PC-9 (cell line): ENCODE measurements at regions of chrX and their contacts with region 1.

Region 1: DNA sequence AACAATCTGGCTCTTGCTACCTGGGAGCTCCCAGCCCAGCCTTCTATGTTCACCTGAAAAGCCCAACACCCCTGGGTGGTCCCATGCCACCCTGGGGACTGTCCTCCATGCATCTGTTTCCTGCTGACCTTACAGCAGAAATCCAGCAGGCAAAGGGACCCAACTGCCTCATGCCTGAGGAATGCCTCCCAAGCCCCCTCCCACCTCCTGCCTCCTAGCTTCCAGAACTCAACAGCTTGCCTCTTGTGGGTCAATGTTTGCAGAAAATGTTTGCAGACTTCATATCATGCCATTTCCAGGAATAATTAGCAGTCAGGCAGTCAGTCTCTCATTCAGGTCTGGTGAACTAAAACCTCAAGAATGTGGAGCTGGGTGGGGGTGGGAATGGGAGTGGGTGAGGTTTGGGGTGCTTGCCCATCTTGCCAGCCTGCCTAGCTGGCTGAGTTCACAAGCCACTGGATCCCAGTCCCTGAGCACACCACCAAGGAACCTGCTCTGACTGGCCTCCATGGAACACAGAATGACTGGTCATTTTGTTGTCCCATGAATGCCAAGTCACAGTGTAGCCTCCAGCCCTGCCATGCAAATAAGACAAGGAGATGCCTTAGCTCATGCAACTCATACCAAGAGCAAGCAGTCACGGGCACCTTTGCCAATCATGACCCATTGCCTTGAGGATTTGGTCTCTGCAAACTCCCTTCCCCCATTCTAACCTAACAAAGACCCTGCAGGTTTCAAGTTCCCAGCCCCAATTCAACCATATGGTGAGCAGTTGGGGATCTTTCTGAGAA is 12.1 kb upstream of the PLAC1 start:
- DNase-seq: peak; percentile 88 to 98
- H3K4me3 ChIP-seq: no peak overlapping the region
- H3K27ac ChIP-seq: peak overlapping the region; percentile 85
- H3K4me1 ChIP-seq: peaks cover 32% of the 10 kb centered on the region
- H3K27me3 ChIP-seq: no peaks in the 10 kb centered on the region
- CTCF ChIP-seq: no peak

Region 2: GRCh38 chrX:134520860-134521390 is 149.4 kb before region 1 on chrX:
- CTCF ChIA-PET with region 1: no interaction called
- POLR2A ChIA-PET with region 1: no interaction called
- intact Hi-C with region 1: loop called (anchors 1 kb)
- DNase-seq: peak; percentile 48 to 66
- H3K4me3 ChIP-seq: no peak overlapping the region
- H3K27ac ChIP-seq: no peak overlapping the region
- H3K4me1 ChIP-seq: peaks cover 11% of the 10 kb centered on the region; the same call in 1 of the 2 replicates
- H3K27me3 ChIP-seq: no peaks in the 10 kb centered on the region
- CTCF ChIP-seq: peak; percentile 78

Region 3: DNA sequence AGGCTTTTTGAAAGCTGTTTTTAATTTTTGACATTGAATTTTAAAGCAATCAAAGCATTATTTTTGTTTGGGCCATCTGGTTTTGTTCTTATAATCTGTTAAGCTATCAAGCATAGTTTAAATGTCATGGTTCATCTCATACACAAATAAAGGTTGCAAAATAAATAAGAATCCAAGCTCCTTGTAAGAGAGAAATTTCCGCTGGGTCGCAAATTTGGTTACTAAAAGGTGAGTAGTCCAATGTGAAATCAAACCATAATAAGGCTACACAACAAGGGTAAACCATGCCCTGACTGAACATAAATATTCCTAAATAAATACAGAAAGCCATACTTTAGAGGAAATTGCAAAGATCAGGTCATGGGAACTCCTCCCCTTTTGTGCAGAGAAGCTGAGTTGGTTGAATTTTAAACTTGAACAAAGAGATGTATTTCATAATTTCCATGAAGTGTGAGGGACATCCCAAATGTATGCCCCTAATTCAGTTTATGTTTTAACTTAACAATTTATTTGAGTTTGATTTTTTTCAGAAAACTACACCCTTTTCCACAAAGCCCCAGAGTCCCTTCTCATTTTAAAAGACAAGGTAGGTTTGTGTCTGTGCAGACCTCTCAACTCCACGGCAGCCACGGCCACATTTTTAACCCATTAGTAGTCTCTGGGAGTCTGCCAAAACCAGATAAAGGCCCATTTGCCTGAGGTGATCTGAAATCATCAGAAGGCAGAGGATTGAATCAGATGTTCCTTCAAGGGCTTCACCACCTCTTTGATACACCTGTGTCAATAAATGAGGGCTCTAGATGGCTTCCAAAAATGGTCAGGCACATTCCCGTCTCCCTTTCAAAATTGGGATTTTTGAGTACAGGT is 97.3 kb before region 1 on chrX:
- CTCF ChIA-PET with region 1: interaction called, 8 read pairs
- POLR2A ChIA-PET with region 1: interaction called, 6 read pairs
- intact Hi-C with region 1: loop called (anchors 1 kb)
- DNase-seq: peak; percentile 58 to 89
- H3K4me3 ChIP-seq: peak overlapping the region; percentile 10; the same call in 1 of the 2 replicates
- H3K27ac ChIP-seq: peak overlapping the region; percentile 58
- H3K4me1 ChIP-seq: peaks cover 69% of the 10 kb centered on the region
- H3K27me3 ChIP-seq: no peaks in the 10 kb centered on the region
- CTCF ChIP-seq: no peak

Region 4: DNA sequence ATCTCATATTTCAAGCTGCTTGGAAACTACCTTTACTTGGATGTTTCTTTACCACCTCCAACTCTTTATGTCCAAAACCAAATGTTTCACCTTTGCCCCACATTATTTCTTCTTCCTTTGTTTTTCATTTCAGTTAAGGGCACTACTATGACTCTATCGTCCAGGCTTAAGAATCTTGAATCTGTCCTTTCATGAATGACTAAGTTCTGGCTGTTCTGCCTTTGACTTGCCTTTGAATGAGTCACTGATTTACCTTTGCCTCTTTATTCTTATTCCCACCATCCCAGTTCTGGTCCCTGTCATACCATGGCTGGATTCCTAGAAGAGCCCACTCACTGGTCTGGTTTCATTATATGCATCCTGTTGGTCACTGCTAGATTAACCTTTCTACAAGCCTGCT is 18.5 kb after region 1 on chrX:
- CTCF ChIA-PET with region 1: interaction called, 5 read pairs
- POLR2A ChIA-PET with region 1: no interaction called
- intact Hi-C with region 1: loop called (anchors 2 kb)
- DNase-seq: peak in 1 of 2 experiments; percentile 63
- H3K4me3 ChIP-seq: no peak overlapping the region
- H3K27ac ChIP-seq: 0 out of 2 replicates have a peak overlapping the region, but pooled peaks have one; percentile 3
- H3K4me1 ChIP-seq: peaks cover 8% of the 10 kb centered on the region; the same call in 1 of the 2 replicates
- H3K27me3 ChIP-seq: no peaks in the 10 kb centered on the region
- CTCF ChIP-seq: no peak

Region 5: DNA sequence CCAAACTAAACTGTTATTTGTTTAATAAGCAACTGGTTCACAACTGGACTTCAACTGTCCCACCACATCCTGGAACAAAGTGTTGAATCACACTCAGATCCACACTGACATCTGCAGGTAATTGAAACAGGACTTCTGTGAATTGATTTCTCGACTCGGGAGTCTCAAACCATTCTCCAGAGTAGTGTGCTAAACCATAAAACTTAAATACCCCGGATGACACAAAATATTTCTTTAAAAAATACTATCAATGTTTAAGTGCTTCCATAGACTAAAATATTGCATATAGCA is 83.3 kb after region 1 on chrX:
- CTCF ChIA-PET with region 1: interaction called, 9 read pairs
- POLR2A ChIA-PET with region 1: interaction called, 10 read pairs
- intact Hi-C with region 1: loop called (anchors 1 kb)
- DNase-seq: no peak
- H3K4me3 ChIP-seq: no peak overlapping the region
- H3K27ac ChIP-seq: no peak overlapping the region
- H3K4me1 ChIP-seq: peaks cover 8% of the 10 kb centered on the region; the same call in 1 of the 2 replicates
- H3K27me3 ChIP-seq: no peaks in the 10 kb centered on the region
- CTCF ChIP-seq: no peak; the same call in 1 of the 2 replicates

Region 6: GRCh38 chrX:134774190-134775048 is 104.1 kb after region 1 on chrX:
- CTCF ChIA-PET with region 1: no interaction called
- POLR2A ChIA-PET with region 1: no interaction called
- intact Hi-C with region 1: no loop called
- DNase-seq: no peak
- H3K4me3 ChIP-seq: no peak overlapping the region
- H3K27ac ChIP-seq: no peak overlapping the region
- H3K4me1 ChIP-seq: no peaks in the 10 kb centered on the region
- H3K27me3 ChIP-seq: no peaks in the 10 kb centered on the region
- CTCF ChIP-seq: no peak